ENCODE measurements at regions of chr1 and their contacts with region 1.

Region 1: DNA sequence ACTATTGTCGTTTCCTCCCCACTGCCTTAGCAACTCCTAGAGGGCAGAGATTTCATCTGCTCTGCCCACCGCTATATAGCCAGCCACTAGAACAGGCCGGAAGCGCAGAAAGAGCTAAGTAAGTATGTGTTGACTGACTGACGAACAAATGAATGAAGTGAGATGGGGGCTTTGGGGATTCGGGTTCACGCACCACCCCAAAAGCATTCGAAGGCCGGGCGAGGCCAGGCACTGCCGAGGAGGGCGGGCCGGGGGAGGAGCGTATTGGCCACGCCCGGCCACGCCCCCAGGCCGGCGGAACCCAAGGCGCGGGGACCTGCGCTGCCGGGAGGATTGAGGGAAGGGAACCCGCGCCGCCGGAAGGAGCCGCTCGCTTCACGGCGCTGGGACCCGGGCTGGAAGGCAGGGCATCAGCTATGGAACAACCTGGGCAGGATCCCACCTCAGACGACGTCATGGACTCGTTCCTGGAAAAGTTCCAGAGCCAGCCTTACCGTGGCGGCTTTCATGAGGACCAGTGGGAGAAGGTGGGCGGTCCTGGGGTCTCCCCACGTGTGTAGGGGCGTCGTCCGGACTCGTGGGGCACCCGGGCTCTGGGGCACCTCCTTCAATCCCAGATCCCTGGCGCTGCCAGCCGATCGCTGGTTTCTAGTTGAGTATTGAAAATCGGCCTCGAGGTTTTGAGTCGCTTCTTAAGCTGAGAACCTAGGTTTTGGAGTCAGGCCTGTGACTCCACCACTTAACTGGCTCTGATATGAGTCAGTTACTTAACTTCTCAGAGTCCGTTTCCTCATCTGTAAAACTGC is at the start of gene TTC4:
- DNase-seq: peak; percentile 85 to 93 (median 86)
- ATAC-seq: peak; percentile 93 to 99 (median 98)
- H3K4me3 ChIP-seq: peak within 1 kb of the TSS; percentile 49 to 94 (median 86)
- H3K27ac ChIP-seq: peak within 1 kb of the TSS in 11 of 12 donors; percentile 40 to 82 (median 74)
- H3K4me1 ChIP-seq: peaks cover 0 to 23% (median 12%) of the 10 kb centered on the region in 12 donors
- H3K27me3 ChIP-seq: no peaks in the 10 kb centered on the region
- CTCF ChIP-seq: peak in 2 of 12 donors; percentile 8 to 21
- POLR2A ChIP-seq: peak in 1 of 2 donors; percentile 75
- total RNA-seq, gene TTC4: 9.5 to 24.0 (median 15.2) TPM

Region 2: GRCh38 chr1:54591127-54591756 is 124.5 kb before region 1 on chr1:
- intact Hi-C with region 1: no loop called
- DNase-seq: no peak
- ATAC-seq: no peak
- H3K4me3 ChIP-seq: no peak overlapping the region
- H3K27ac ChIP-seq: peak overlapping the region in 5 of 12 donors; percentile 25 to 95 (median 60)
- H3K4me1 ChIP-seq: peaks cover 0 to 62% (median 1%) of the 10 kb centered on the region in 12 donors
- H3K27me3 ChIP-seq: no peaks in the 10 kb centered on the region
- CTCF ChIP-seq: no peak
- POLR2A ChIP-seq: no peak

Region 3: DNA sequence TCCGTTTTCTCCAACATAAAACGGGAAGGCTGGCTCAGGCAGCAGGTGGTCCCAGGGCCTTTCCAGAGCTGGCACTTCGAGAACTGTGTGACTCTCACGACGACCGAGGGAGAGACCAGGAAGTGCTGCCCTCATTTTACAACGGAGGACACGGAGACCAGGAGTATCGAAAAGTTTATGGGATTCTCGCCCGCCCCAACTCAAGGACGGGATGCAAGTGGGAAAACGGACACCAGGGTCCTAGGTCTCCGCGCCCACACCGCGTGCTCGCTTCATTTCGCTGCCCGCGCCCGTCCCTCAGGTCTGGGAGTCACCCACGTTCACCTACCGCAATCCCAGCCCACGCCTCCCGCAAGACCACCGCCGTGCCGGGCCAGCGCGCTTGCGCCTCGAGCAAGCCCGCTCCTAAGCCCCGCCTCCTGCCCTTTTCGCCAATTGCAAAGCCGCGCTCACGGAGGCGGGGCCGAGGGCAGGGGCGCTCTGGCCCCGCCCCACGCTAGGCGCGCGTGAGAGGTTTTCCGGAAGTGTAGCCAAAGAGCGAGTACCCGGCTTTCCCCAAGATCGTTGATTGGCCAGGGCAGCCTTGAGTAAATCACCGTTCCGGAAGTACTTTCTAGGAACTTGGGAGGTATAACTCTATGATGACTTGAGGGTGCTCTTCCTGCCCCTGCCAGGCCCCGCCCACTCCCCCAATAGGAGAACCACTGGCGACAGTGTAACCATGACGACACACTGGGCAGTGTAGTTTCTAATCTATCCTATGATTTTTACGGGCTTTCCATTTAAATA is 48.6 kb after region 1 on chr1 and contains the start of gene PARS2:
- intact Hi-C with region 1: loop called in 4 of 10 experiments (anchors 1 to 5 kb)
- DNase-seq: peak; percentile 96 to 98 (median 97)
- ATAC-seq: peak; percentile 98 to 99 (median 98)
- H3K4me3 ChIP-seq: peak within 1 kb of the TSS; percentile 38 to 95 (median 84)
- H3K27ac ChIP-seq: peak within 1 kb of the TSS in 11 of 12 donors; percentile 36 to 84 (median 61)
- H3K4me1 ChIP-seq: peaks cover 0 to 20% (median 10%) of the 10 kb centered on the region in 12 donors
- H3K27me3 ChIP-seq: no peaks in the 10 kb centered on the region
- CTCF ChIP-seq: no peak
- POLR2A ChIP-seq: peak in 1 of 2 donors; percentile 90
- total RNA-seq, gene PARS2: 4.5 to 7.7 (median 5.3) TPM